ENCODE measurements at regions of chr12 and their contacts with region 1.

Region 1: GRCh38 chr12:124884587-124885438 is 21.1 kb upstream of the SCARB1 start:
- DNase-seq: no peak
- H3K4me3 ChIP-seq: no peak overlapping the region
- CTCF ChIP-seq: no peak
- POLR2A ChIP-seq: no peak

Region 2: GRCh38 chr12:124527861-124528561 is 356.8 kb before region 1 on chr12:
- intact Hi-C with region 1: no loop called
- DNase-seq: no peak
- H3K4me3 ChIP-seq: no peak overlapping the region
- CTCF ChIP-seq: no peak
- POLR2A ChIP-seq: no peak

Region 3: GRCh38 chr12:124867401-124867930 is 17.3 kb before region 1 on chr12:
- intact Hi-C with region 1: loop called (anchors 1 kb)
- DNase-seq: no peak
- H3K4me3 ChIP-seq: no peak overlapping the region
- CTCF ChIP-seq: no peak
- POLR2A ChIP-seq: no peak

Region 4: DNA sequence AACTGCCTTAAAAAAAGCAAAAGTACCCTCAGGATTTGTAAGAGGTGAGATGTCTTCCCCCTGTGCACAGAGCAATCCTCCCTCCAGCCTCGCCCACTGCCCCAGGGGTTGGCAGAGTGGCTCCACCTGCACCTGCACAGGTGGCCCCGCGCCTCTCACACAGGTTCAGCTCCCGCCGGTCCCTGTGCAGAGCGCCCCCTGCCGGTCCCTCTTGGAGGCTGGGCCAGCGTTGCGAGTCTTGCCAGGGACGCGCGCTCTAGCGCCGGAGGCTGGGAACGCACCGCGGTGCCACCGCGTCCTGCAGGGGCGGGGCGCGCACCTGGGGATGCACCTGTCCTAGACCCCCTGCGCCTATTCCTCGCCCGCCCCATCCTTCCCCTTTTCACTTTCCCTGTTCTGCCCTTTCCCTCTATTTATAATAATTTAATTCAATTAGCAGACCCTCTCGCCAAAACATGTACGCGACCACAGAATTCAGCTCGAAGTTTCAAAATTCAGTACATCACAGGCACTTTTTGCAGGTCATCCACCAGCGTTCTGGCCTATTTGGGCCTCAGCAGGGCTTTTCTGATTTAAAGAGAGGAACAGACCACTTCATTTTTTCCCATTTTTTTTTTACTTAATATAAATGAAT is 799.1 kb after region 1 on chr12:
- intact Hi-C with region 1: no loop called
- DNase-seq: no peak
- H3K4me3 ChIP-seq: no peak overlapping the region
- CTCF ChIP-seq: no peak
- POLR2A ChIP-seq: no peak

Measured in lower leg skin (tissue), 4 donors.